ENCODE measurements at regions of chr4 and their contacts with region 1.

Region 1: GRCh38 chr4:37891260-37892159 is 626 bp downstream of the TBC1D1 start:
- DNase-seq: peak; percentile 71
- H3K4me3 Mint-ChIP-seq: peak overlapping the region; percentile 87
- H3K27ac Mint-ChIP-seq: peak overlapping the region; percentile 90
- H3K4me1 Mint-ChIP-seq: peaks cover 32% of the 10 kb centered on the region
- H3K27me3 Mint-ChIP-seq: peaks cover 4% of the 10 kb centered on the region

Region 2: DNA sequence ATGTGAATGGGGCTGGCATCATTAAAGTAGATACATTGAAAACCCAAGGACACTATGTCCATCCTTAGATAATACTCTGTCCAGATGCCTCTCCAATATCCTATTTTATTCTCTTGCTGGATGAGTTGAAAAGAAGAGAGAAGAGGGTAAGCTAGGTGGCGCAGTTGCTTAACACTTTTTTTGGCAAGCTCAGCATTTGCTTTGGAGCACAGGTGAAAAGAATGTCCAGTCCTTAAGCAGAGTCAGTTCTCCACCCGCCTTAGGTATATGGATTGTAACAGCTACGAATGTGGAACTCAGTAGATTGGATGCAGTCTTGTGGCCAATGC is 438.6 kb before region 1 on chr4:
- CTCF ChIA-PET with region 1: no interaction called
- POLR2A ChIA-PET with region 1: no interaction called
- intact Hi-C with region 1: loop called (anchors 2 kb)
- DNase-seq: peak; percentile 55
- H3K4me3 Mint-ChIP-seq: peak overlapping the region; percentile 52
- H3K27ac Mint-ChIP-seq: no peak overlapping the region
- H3K4me1 Mint-ChIP-seq: peaks cover 12% of the 10 kb centered on the region
- H3K27me3 Mint-ChIP-seq: peaks cover 33% of the 10 kb centered on the region

Region 3: GRCh38 chr4:37686373-37687193 is 204.9 kb before region 1 on chr4 and contains the start of gene RELL1:
- CTCF ChIA-PET with region 1: no interaction called
- POLR2A ChIA-PET with region 1: no interaction called
- intact Hi-C with region 1: loop called (anchors 1 kb)
- DNase-seq: peak; percentile 100
- H3K4me3 Mint-ChIP-seq: peak within 1 kb of the TSS; percentile 86
- H3K27ac Mint-ChIP-seq: peak within 1 kb of the TSS; percentile 91
- H3K4me1 Mint-ChIP-seq: peaks cover 34% of the 10 kb centered on the region
- H3K27me3 Mint-ChIP-seq: no peaks in the 10 kb centered on the region
- total RNA-seq, gene RELL1: 15.0 to 16.0 TPM

Region 4: GRCh38 chr4:37826295-37827029 is 65.0 kb before region 1 on chr4 and contains the start of gene PGM2:
- CTCF ChIA-PET with region 1: interaction called, 5 read pairs
- POLR2A ChIA-PET with region 1: interaction called, 5 read pairs
- intact Hi-C with region 1: loop called (anchors 1 kb)
- DNase-seq: peak; percentile 93
- H3K4me3 Mint-ChIP-seq: peak within 1 kb of the TSS; percentile 92
- H3K27ac Mint-ChIP-seq: peak within 1 kb of the TSS; percentile 81
- H3K4me1 Mint-ChIP-seq: peaks cover 24% of the 10 kb centered on the region
- H3K27me3 Mint-ChIP-seq: no peaks in the 10 kb centered on the region
- total RNA-seq, gene PGM2: 65.7 to 66.0 TPM

Region 5: GRCh38 chr4:37928426-37929416 is 37.2 kb after region 1 on chr4:
- CTCF ChIA-PET with region 1: no interaction called
- POLR2A ChIA-PET with region 1: no interaction called
- intact Hi-C with region 1: loop called (anchors 1 kb)
- DNase-seq: no peak
- H3K4me3 Mint-ChIP-seq: no peak overlapping the region
- H3K27ac Mint-ChIP-seq: no peak overlapping the region
- H3K4me1 Mint-ChIP-seq: peaks cover 29% of the 10 kb centered on the region
- H3K27me3 Mint-ChIP-seq: no peaks in the 10 kb centered on the region

Region 6: GRCh38 chr4:37977471-37978247 is 86.1 kb after region 1 on chr4:
- CTCF ChIA-PET with region 1: interaction called, 12 read pairs
- POLR2A ChIA-PET with region 1: interaction called, 6 read pairs
- intact Hi-C with region 1: loop called (anchors 1 kb)
- DNase-seq: peak; percentile 82
- H3K4me3 Mint-ChIP-seq: peak overlapping the region; percentile 75
- H3K27ac Mint-ChIP-seq: peak overlapping the region; percentile 63
- H3K4me1 Mint-ChIP-seq: peaks cover 36% of the 10 kb centered on the region
- H3K27me3 Mint-ChIP-seq: no peaks in the 10 kb centered on the region

Region 7: DNA sequence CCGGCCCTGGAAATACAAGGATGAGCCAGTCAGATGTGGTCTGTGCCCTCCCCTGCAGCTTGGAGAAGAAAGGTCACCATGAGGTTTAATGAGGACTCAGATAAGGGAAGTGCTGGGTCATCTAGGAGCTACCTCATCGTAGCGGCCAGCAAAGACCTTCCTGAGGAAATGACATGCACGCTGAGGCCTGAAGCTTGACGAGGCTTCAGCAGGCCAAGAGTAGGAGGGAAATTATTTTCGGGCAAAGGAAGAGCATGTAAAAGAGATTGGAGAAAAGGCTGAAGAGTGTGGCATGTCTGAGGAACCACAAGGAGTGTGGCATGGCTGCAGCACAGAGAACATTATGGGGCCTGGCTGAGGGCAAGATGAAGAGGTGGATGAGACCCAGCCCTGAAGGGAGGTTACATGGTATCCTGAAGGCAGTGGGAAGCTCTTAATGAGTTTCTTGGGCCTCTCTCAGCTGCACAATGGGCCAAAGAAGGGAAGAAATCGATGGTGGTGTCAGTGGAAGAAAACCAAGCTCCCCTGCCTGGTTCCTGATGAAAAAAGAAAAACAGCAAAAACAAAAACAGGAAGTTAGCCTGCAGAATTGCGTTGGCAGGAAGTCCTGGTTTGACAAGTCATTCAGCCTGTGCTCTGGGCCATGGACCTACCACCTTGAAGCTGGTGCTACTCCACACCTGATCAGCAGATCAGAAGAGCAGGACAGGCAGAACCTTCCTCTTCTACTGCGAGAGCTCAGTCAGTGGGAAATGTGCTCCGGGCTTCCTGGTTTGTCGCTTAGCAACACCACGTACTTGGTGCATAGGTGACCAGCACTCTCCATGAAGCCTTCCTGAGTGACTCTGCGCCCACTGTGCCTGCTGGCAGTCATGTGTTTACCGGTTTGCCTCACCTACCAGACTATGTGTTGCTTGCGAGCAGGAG is 637.9 kb after region 1 on chr4:
- CTCF ChIA-PET with region 1: no interaction called
- POLR2A ChIA-PET with region 1: no interaction called
- intact Hi-C with region 1: loop called (anchors 10 kb)
- DNase-seq: peak; percentile 88
- H3K4me3 Mint-ChIP-seq: peak overlapping the region; percentile 15
- H3K27ac Mint-ChIP-seq: peak overlapping the region; percentile 85
- H3K4me1 Mint-ChIP-seq: peaks cover 42% of the 10 kb centered on the region
- H3K27me3 Mint-ChIP-seq: peaks cover 11% of the 10 kb centered on the region